CD8-positive, alpha-beta memory T cell (primary cell): ENCODE measurements at regions of chr4 and their contacts with region 1.

Region 1: DNA sequence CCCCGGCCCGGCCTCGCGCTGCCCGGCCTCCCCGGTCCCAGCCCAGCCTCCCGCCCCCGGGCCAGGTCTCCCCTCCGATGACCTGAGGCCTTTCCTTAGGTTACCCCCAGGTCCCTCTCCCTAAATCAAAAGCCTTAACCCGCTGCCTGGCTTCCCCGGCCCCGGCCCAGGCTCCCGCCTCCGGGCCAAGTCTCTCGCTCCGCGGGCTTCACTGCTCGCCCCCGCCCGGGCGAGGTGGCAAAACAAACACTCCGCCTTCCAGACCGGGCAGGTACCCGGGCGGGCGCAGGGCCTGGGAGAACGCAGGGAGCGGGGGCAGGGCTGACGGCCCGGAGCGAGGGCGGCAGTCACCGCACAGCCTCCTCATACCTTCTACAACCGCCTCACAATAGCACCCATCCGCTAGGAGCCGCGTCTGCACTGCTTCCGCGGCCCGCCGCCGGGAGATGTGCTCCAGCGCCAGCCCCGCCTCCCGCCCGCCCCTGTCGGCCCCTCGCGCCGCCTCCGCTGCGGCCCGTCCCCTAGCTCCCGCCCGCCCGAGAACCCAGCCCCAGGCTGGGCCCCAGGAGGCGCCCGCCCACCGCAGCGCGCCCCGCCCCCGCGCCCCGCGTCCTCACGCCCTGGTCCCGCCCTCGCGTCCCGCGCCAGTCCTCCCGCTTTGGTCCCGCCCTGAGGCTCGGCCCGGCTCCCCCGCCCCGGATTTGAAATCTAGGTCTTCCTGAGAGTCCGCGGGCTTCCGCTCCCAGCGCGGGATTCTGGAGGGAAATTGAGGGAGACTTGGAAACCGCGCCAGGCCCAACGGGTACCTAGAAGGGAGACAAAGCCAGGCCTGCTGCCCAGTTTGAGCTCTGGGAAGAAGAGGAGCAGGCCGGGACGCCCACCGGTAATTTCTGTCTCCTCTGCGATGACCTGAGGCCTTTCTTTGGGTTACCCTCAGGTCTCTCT is at the starts of genes CASP3 and PRIMPOL:
- DNase-seq: peak; percentile 94 to 97 (median 95)
- H3K4me3 ChIP-seq: peak within 1 kb of the TSS; percentile 89
- H3K4me3 Mint-ChIP-seq: peak within 1 kb of the TSS; percentile 92 to 99 (median 97)
- H3K27ac ChIP-seq: peak within 1 kb of the TSS; percentile 82
- H3K27ac Mint-ChIP-seq: peak within 1 kb of the TSS; percentile 87 to 98 (median 96)
- H3K4me1 ChIP-seq: peaks cover 48% of the 10 kb centered on the region
- H3K4me1 Mint-ChIP-seq: peaks cover 50 to 67% (median 60%) of the 10 kb centered on the region in 3 donors
- H3K27me3 ChIP-seq: no peaks in the 10 kb centered on the region
- H3K27me3 Mint-ChIP-seq: no peaks in the 10 kb centered on the region
- total RNA-seq, gene CASP3: 75.1 to 77.1 TPM
- total RNA-seq, gene PRIMPOL: 19.0 to 20.2 TPM

Region 2: GRCh38 chr4:184538023-184538599 is 111.2 kb before region 1 on chr4:
- CTCF ChIA-PET with region 1: interaction called, 3 read pairs
- POLR2A ChIA-PET with region 1: interaction called, 10 read pairs
- DNase-seq: peak; percentile 20 to 75 (median 63)
- H3K4me3 ChIP-seq: peak overlapping the region; percentile 89
- H3K4me3 Mint-ChIP-seq: peak overlapping the region; percentile 90 to 97 (median 94)
- H3K27ac ChIP-seq: peak overlapping the region; percentile 88
- H3K27ac Mint-ChIP-seq: peak overlapping the region; percentile 97 to 100 (median 99)
- H3K4me1 ChIP-seq: peaks cover 33% of the 10 kb centered on the region
- H3K4me1 Mint-ChIP-seq: peaks cover 40 to 51% (median 41%) of the 10 kb centered on the region in 3 donors
- H3K27me3 ChIP-seq: no peaks in the 10 kb centered on the region
- H3K27me3 Mint-ChIP-seq: no peaks in the 10 kb centered on the region

Region 3: DNA sequence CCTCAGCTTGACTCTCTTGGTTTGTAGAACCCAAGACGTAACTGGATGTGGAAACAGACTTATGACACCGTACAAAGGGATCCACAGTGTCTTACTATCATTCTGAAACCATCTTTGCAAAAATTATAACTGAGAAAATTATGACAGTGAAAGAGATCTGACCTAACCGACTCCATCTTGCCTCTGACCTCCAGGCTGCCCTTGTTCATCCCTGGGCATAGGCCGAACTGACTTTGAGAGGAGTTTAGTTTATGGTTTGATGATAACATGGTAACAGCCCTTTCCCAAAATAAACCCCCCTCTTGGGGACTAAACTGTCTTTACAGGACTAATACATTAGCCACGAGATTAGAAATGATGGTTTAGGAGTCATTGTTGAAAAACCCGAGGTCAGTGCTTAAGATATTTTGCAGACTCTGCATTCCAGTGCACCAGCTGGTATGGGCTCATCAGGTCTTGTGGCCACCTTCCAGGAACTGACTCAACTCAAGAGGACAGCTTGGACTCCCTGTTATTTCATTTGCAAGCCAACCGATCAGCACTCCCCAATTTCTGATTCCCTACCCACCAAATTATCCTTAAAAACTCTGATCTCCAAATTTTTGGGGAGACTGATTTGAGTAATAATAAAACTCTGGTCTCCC is 49.7 kb before region 1 on chr4:
- CTCF ChIA-PET with region 1: no interaction called
- POLR2A ChIA-PET with region 1: no interaction called
- DNase-seq: no peak
- H3K4me3 ChIP-seq: no peak overlapping the region
- H3K4me3 Mint-ChIP-seq: no peak overlapping the region
- H3K27ac ChIP-seq: no peak overlapping the region
- H3K27ac Mint-ChIP-seq: no peak overlapping the region
- H3K4me1 ChIP-seq: no peaks in the 10 kb centered on the region
- H3K4me1 Mint-ChIP-seq: peaks cover 0 to 6% (median 4%) of the 10 kb centered on the region in 3 donors
- H3K27me3 ChIP-seq: no peaks in the 10 kb centered on the region
- H3K27me3 Mint-ChIP-seq: peaks cover 34 to 43% of the 10 kb centered on the region in 2 donors

Region 4: GRCh38 chr4:184722798-184723197 is 73.5 kb after region 1 on chr4:
- CTCF ChIA-PET with region 1: no interaction called
- POLR2A ChIA-PET with region 1: no interaction called
- DNase-seq: no peak
- H3K4me3 ChIP-seq: no peak overlapping the region
- H3K4me3 Mint-ChIP-seq: no peak overlapping the region
- H3K27ac ChIP-seq: no peak overlapping the region
- H3K27ac Mint-ChIP-seq: peak overlapping the region in 1 of 8 donors; percentile 10
- H3K4me1 ChIP-seq: no peaks in the 10 kb centered on the region
- H3K4me1 Mint-ChIP-seq: peaks cover 0 to 3% (median 0%) of the 10 kb centered on the region in 3 donors
- H3K27me3 ChIP-seq: no peaks in the 10 kb centered on the region
- H3K27me3 Mint-ChIP-seq: no peaks in the 10 kb centered on the region

Region 5: GRCh38 chr4:184733654-184734524 is 84.6 kb after region 1 on chr4 and contains the start of gene CENPU:
- CTCF ChIA-PET with region 1: interaction called, 18 read pairs
- POLR2A ChIA-PET with region 1: interaction called, 17 read pairs
- DNase-seq: peak; percentile 89 to 96 (median 93)
- H3K4me3 ChIP-seq: peak within 1 kb of the TSS; percentile 73
- H3K4me3 Mint-ChIP-seq: peak within 1 kb of the TSS; percentile 86 to 94 (median 92)
- H3K27ac ChIP-seq: peak within 1 kb of the TSS; percentile 72
- H3K27ac Mint-ChIP-seq: peak within 1 kb of the TSS; percentile 29 to 93 (median 85)
- H3K4me1 ChIP-seq: peaks cover 6% of the 10 kb centered on the region
- H3K4me1 Mint-ChIP-seq: peaks cover 17 to 29% (median 22%) of the 10 kb centered on the region in 3 donors
- H3K27me3 ChIP-seq: no peaks in the 10 kb centered on the region
- H3K27me3 Mint-ChIP-seq: peaks cover 0 to 2% of the 10 kb centered on the region in 2 donors
- total RNA-seq, gene CENPU: 54.5 to 56.9 TPM